OCI-LY7 (cell line): ENCODE measurements at regions of chr1 and their contacts with region 1.

Region 1: GRCh38 chr1:215710036-215710898 is 143.2 kb downstream of the KCTD3 start:
- DNase-seq: peak; percentile 58
- H3K4me3 ChIP-seq: no peak overlapping the region
- H3K27ac ChIP-seq: no peak overlapping the region
- H3K4me1 ChIP-seq: no peaks in the 10 kb centered on the region
- CTCF ChIP-seq: peak; percentile 86

Region 2: GRCh38 chr1:215623162-215623561 is 87.1 kb before region 1 on chr1:
- CTCF ChIA-PET with region 1: no interaction called
- POLR2A ChIA-PET with region 1: no interaction called
- intact Hi-C with region 1: no loop called
- DNase-seq: no peak
- H3K4me3 ChIP-seq: no peak overlapping the region
- H3K27ac ChIP-seq: no peak overlapping the region
- H3K4me1 ChIP-seq: no peaks in the 10 kb centered on the region
- CTCF ChIP-seq: no peak

Region 3: GRCh38 chr1:215731699-215732098 is 21.4 kb after region 1 on chr1:
- CTCF ChIA-PET with region 1: no interaction called
- POLR2A ChIA-PET with region 1: no interaction called
- intact Hi-C with region 1: loop called (anchors 2 kb)
- DNase-seq: no peak
- H3K4me3 ChIP-seq: no peak overlapping the region
- H3K27ac ChIP-seq: no peak overlapping the region
- H3K4me1 ChIP-seq: no peaks in the 10 kb centered on the region
- CTCF ChIP-seq: no peak